K562 (cell line): ENCODE measurements at regions of chr1 and their contacts with region 1.

Region 1: DNA sequence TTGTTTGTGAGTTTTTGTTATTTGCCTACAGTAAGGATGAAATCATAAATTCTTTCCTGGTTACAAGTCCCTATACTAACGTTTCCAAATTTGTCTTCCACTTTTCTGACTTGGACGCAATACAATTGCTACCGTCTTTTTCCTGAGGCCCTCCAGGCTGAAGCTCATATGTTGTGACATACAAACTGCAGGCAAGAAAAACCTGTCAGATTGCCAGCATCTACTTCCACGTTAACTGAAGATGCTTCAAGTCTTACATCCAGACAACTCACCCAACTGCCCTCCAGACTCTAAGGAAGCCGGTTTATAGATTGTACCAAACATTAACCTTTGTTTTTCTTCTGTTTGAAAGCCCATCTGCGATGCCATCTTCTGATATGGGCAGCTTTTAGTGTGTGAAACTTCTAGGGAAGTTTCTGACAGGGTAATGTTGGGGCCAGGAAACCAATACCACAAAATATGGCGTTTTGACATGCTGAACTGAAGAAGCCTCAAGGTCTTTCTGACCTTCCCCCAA is 21.4 kb upstream of the RNF11 start:
- DNase-seq: no peak
- ATAC-seq: no peak
- H3K4me3 ChIP-seq: no peak overlapping the region
- H3K27ac ChIP-seq: no peak overlapping the region
- H3K4me1 ChIP-seq: no peaks in the 10 kb centered on the region; a peak in 2 of 5 replicates
- H3K27me3 ChIP-seq: no peaks in the 10 kb centered on the region
- CTCF ChIP-seq: no peak
- EP300 ChIP-seq: no peak
- POLR2A ChIP-seq: no peak
- RAD21 ChIP-seq: no peak

Region 2: GRCh38 chr1:51284487-51284954 is 69.8 kb after region 1 on chr1:
- CTCF ChIA-PET with region 1: no interaction called
- POLR2A ChIA-PET with region 1: no interaction called
- in situ Hi-C with region 1: no loop called
- intact Hi-C with region 1: loop called (anchors 5 kb)
- DNase-seq: peak; percentile 92 to 99 (median 94)
- ATAC-seq: peak; percentile 93
- H3K4me3 ChIP-seq: no peak overlapping the region
- H3K27ac ChIP-seq: no peak overlapping the region
- H3K4me1 ChIP-seq: peaks cover 23 to 30% of the 10 kb centered on the region in 2 experiments; a peak in 4 of 5 replicates
- H3K27me3 ChIP-seq: no peaks in the 10 kb centered on the region
- CTCF ChIP-seq: peak in 1 of 3 experiments; percentile 11; a peak in 1 of 6 replicates
- EP300 ChIP-seq: peak; percentile 98
- POLR2A ChIP-seq: no peak
- RAD21 ChIP-seq: peak in 1 of 2 experiments; percentile 28; a peak in 2 of 4 replicates

Region 3: DNA sequence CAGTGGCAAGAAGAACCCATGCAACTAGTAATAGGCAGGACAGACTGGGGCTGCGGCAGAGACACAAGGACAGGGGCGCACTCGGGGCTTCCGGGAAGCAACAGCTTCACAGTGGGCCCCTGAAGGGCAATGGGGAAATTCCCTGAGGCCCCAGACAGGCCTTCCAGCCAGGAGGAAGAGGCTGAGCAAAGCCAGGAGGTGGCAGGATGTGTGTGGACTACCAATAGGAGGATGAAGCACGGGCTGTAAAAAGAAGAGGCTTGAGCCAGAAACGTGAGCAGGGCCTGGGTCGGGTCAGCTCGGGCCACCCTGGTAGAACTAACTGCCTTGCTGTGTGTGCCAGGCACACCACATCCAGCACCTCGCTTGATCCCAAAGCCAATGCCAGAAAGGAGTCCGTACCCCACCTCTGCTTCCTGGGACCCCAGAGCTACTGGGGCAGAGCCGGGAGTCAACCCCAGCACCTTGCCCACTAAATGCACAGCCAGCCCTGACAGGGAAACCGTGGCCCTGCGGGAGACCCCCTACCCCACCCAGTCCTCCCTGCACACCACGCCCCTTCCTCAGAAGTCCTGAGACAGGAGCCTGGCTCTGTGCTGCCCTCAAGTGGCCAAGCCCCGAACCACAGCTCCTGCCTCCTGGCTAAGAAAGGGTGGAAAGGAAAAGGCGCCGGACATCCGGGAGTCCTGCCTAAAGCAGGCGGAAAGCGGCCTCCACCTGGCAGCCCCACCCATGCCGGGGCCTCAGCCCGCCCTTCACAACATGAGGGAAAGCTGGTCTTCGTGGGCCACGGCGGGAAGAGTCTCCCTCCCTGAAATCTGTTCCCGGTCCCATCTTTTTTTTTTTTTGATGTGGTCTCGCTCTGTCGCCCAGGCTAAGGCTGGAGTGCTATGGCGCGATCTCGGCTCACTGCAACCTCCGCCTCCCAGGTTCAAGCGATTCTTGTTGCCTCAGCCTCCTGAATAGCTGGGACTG is 82.0 kb after region 1 on chr1:
- CTCF ChIA-PET with region 1: interaction called, 3 read pairs
- POLR2A ChIA-PET with region 1: no interaction called
- in situ Hi-C with region 1: loop called (anchors 5 kb)
- intact Hi-C with region 1: loop called (anchors 2 kb)
- DNase-seq: peak; percentile 90 to 94 (median 91)
- ATAC-seq: peak; percentile 92
- H3K4me3 ChIP-seq: no peak overlapping the region
- H3K27ac ChIP-seq: no peak overlapping the region; the same call in 2 of the 3 replicates
- H3K4me1 ChIP-seq: peaks cover 12 to 44% of the 10 kb centered on the region in 2 experiments; a peak in 4 of 5 replicates
- H3K27me3 ChIP-seq: no peaks in the 10 kb centered on the region
- CTCF ChIP-seq: peak; percentile 94 to 99 (median 96)
- EP300 ChIP-seq: no peak
- POLR2A ChIP-seq: no peak
- RAD21 ChIP-seq: peak; percentile 90 to 94

Region 4: DNA sequence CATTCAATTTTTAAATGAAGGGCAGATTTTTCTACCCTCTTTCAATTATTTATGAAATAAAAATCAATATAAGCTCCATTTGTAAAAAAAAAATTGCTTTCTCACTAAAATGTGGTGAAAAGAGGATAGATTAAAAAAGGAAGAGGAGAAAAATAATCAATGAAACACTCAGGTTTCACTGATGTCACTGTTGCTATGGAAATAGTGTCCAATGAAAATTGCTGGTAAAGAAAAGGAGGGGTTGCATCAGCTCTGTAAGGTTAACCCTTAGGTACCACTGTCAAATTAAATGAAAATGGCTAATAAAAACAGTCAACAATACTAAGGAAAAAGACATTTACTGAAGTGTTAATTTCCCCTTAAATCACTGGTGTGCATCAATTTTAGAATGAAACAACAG is 207.3 kb after region 1 on chr1:
- CTCF ChIA-PET with region 1: no interaction called
- POLR2A ChIA-PET with region 1: no interaction called
- in situ Hi-C with region 1: no loop called
- intact Hi-C with region 1: no loop called
- DNase-seq: peak; percentile 51 to 59 (median 53)
- ATAC-seq: peak; percentile 82
- H3K4me3 ChIP-seq: no peak overlapping the region
- H3K27ac ChIP-seq: no peak overlapping the region
- H3K4me1 ChIP-seq: peaks cover 7 to 33% of the 10 kb centered on the region in 2 experiments
- H3K27me3 ChIP-seq: no peaks in the 10 kb centered on the region
- CTCF ChIP-seq: no peak
- EP300 ChIP-seq: peak; percentile 55
- POLR2A ChIP-seq: no peak
- RAD21 ChIP-seq: no peak